CD4-positive, alpha-beta memory T cell (primary cell): ENCODE measurements at regions of chr1 and their contacts with region 1.

Region 1: DNA sequence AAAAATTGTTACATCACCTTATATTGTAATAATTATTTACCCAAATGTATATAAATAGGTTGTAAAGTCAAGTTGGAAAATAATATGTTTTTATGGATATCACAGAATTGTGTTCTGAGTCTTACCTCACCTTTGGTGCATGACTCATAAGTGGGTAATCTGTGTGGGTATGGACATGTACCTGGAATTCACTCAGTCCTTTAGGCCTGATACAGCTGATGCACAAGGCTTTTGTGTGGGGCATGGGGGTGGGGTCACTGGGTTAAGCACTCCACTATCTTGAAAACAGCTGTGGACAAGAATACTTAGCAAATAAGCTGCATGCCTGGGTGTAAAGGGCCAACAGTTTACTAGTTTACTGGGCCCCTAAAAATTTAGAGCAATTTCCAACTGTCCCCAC is 34.4 kb downstream of the INKA2 start:
- DNase-seq: no peak
- H3K4me3 ChIP-seq: no peak overlapping the region
- H3K4me3 Mint-ChIP-seq: no peak overlapping the region
- H3K27ac ChIP-seq: no peak overlapping the region
- H3K27ac Mint-ChIP-seq: peak overlapping the region in 1 of 7 donors; percentile 69
- H3K4me1 ChIP-seq: no peaks in the 10 kb centered on the region
- H3K4me1 Mint-ChIP-seq: peaks cover 8 to 17% (median 11%) of the 10 kb centered on the region in 4 donors
- H3K27me3 ChIP-seq: no peaks in the 10 kb centered on the region
- H3K27me3 Mint-ChIP-seq: no peaks in the 10 kb centered on the region

Region 2: GRCh38 chr1:111656086-111657017 is 48.4 kb before region 1 on chr1:
- CTCF ChIA-PET with region 1: no interaction called
- POLR2A ChIA-PET with region 1: no interaction called
- intact Hi-C with region 1: loop called (anchors 5 kb)
- DNase-seq: peak in 4 of 5 donors; percentile 18 to 39 (median 36)
- H3K4me3 ChIP-seq: no peak overlapping the region
- H3K4me3 Mint-ChIP-seq: peak overlapping the region in 4 of 8 donors; percentile 16 to 53 (median 28)
- H3K27ac ChIP-seq: no peak overlapping the region
- H3K27ac Mint-ChIP-seq: peak overlapping the region in 5 of 7 donors; percentile 8 to 57 (median 45)
- H3K4me1 ChIP-seq: peaks cover 84% of the 10 kb centered on the region
- H3K4me1 Mint-ChIP-seq: peaks cover 38 to 51% (median 45%) of the 10 kb centered on the region in 4 donors
- H3K27me3 ChIP-seq: no peaks in the 10 kb centered on the region
- H3K27me3 Mint-ChIP-seq: no peaks in the 10 kb centered on the region